ENCODE measurements at regions of chr2 and their contacts with region 1.

Region 1: GRCh38 chr2:60881047-60881932 is at the start of gene REL:
- DNase-seq: peak; percentile 91
- H3K4me3 ChIP-seq: peak within 1 kb of the TSS; percentile 71 to 98 (median 85)
- H3K27ac ChIP-seq: peak within 1 kb of the TSS; percentile 100
- H3K4me1 ChIP-seq: peaks cover 11% of the 10 kb centered on the region
- H3K27me3 ChIP-seq: no peaks in the 10 kb centered on the region
- CTCF ChIP-seq: peak in 1 of 2 donors; percentile 12
- total RNA-seq, gene REL: 14.5 to 15.0 TPM

Region 2: DNA sequence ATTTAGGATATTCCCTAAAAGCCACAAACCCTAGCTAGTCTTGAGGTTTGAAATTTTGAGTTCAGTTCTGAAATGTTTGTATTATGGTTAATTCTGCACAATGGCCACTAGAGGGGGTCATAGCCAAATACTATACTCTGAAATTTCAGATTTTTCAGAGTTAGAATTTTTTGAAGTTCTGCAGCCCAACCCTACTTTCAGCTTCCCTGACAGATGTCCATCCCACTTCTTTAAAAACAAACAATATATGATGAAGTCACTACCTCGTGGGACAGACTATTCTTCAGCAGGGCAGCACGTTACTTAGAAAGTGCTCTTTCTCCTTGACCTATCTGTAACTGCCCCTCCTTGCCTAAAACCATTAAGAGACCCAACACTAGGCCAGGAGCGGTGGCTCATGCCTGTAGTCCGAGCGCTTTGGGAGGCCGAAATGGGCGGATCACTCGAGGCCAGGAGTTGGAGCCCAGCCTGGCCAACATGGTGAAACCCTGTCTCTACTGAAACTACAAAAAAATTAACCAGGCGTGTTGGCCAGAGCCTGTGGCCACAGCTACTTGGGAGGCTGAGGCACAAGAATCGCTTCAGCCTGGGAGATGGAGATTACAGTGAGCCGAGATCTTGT is 173.4 kb before region 1 on chr2:
- CTCF ChIA-PET with region 1: no interaction called
- dilution Hi-C with region 1: no loop called
- in situ Hi-C with region 1: no loop called
- intact Hi-C with region 1: loop called (anchors 5 kb)
- DNase-seq: peak; percentile 24
- H3K4me3 ChIP-seq: no peak overlapping the region
- H3K27ac ChIP-seq: no peak overlapping the region
- H3K4me1 ChIP-seq: peaks cover 12% of the 10 kb centered on the region
- H3K27me3 ChIP-seq: no peaks in the 10 kb centered on the region
- CTCF ChIP-seq: peak; percentile 57 to 70

Region 3: GRCh38 chr2:60764736-60765534 is 116.4 kb before region 1 on chr2:
- CTCF ChIA-PET with region 1: no interaction called
- dilution Hi-C with region 1: no loop called
- in situ Hi-C with region 1: no loop called
- intact Hi-C with region 1: no loop called
- DNase-seq: peak; percentile 14
- H3K4me3 ChIP-seq: no peak overlapping the region
- H3K27ac ChIP-seq: no peak overlapping the region
- H3K4me1 ChIP-seq: no peaks in the 10 kb centered on the region
- H3K27me3 ChIP-seq: no peaks in the 10 kb centered on the region
- CTCF ChIP-seq: no peak

Region 4: GRCh38 chr2:60818272-60818671 is 63.0 kb before region 1 on chr2:
- CTCF ChIA-PET with region 1: no interaction called
- dilution Hi-C with region 1: no loop called
- in situ Hi-C with region 1: no loop called
- intact Hi-C with region 1: loop called (anchors 5 kb)
- DNase-seq: no peak
- H3K4me3 ChIP-seq: no peak overlapping the region
- H3K27ac ChIP-seq: no peak overlapping the region
- H3K4me1 ChIP-seq: no peaks in the 10 kb centered on the region
- H3K27me3 ChIP-seq: no peaks in the 10 kb centered on the region
- CTCF ChIP-seq: peak; percentile 13 to 40

Region 5: DNA sequence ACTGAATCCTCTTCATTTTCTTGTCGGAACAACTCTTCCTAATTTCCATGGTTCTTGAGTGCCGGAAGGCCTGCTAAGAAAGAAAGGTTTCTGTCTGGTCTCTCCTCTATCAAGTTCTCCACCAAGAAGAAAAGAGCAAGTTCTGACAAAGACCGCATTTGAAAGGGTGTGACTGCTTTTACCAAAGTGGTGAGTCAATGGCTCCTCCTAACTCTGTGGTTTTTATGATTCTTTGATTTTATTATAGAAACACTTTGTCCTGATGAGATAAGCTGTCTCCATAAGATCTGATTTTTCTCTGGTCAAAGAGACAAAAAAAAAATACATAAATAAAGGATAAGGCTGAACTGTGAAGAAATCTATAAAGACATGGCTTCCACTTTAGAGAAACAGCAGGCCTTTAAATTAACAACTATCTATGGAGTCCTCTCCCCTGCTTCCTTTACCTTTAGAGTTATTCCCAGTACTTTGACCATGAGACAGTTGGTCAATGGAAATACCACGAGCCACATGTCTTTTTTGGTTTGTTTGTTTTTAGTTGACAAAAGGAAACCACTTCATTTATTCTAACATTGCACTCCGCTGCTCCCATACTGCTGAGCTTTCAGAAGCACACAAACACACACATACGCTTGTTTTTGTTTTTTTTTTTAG is 67.8 kb after region 1 on chr2:
- CTCF ChIA-PET with region 1: no interaction called
- dilution Hi-C with region 1: no loop called
- in situ Hi-C with region 1: no loop called
- intact Hi-C with region 1: loop called (anchors 2 kb)
- DNase-seq: peak; percentile 96
- H3K4me3 ChIP-seq: no peak overlapping the region
- H3K27ac ChIP-seq: peak overlapping the region; percentile 82
- H3K4me1 ChIP-seq: peaks cover 24% of the 10 kb centered on the region
- H3K27me3 ChIP-seq: no peaks in the 10 kb centered on the region
- CTCF ChIP-seq: no peak

Region 6: GRCh38 chr2:61016808-61017555 is 135.7 kb after region 1 on chr2:
- CTCF ChIA-PET with region 1: no interaction called
- dilution Hi-C with region 1: no loop called
- in situ Hi-C with region 1: no loop called
- intact Hi-C with region 1: loop called (anchors 1 kb)
- DNase-seq: peak; percentile 94
- H3K4me3 ChIP-seq: peak overlapping the region; percentile 71 to 96 (median 79)
- H3K27ac ChIP-seq: peak overlapping the region; percentile 85
- H3K4me1 ChIP-seq: peaks cover 14% of the 10 kb centered on the region
- H3K27me3 ChIP-seq: no peaks in the 10 kb centered on the region
- CTCF ChIP-seq: no peak

Measured in mammary epithelial cell (primary cell).